Right cardiac atrium (tissue), 5 donors: ENCODE measurements at regions of chr14 and their contacts with region 1.

Region 1: GRCh38 chr14:64478634-64479250 is 13.4 kb downstream of the AKAP5 start:
- DNase-seq: no peak
- ATAC-seq: no peak
- H3K4me3 ChIP-seq: no peak overlapping the region
- H3K27ac ChIP-seq: no peak overlapping the region
- H3K4me1 ChIP-seq: no peaks in the 10 kb centered on the region
- H3K27me3 ChIP-seq: no peaks in the 10 kb centered on the region

Region 2: GRCh38 chr14:64012720-64013119 is 466.0 kb before region 1 on chr14:
- intact Hi-C with region 1: no loop called
- DNase-seq: no peak
- ATAC-seq: no peak
- H3K4me3 ChIP-seq: no peak overlapping the region
- H3K27ac ChIP-seq: no peak overlapping the region
- H3K4me1 ChIP-seq: peaks cover 2% of the 10 kb centered on the region
- H3K27me3 ChIP-seq: no peaks in the 10 kb centered on the region

Region 3: GRCh38 chr14:64053694-64054528 is 424.8 kb before region 1 on chr14:
- intact Hi-C with region 1: no loop called
- DNase-seq: no peak
- ATAC-seq: no peak
- H3K4me3 ChIP-seq: no peak overlapping the region
- H3K27ac ChIP-seq: no peak overlapping the region
- H3K4me1 ChIP-seq: no peaks in the 10 kb centered on the region
- H3K27me3 ChIP-seq: no peaks in the 10 kb centered on the region

Region 4: GRCh38 chr14:64434528-64434927 is 44.2 kb before region 1 on chr14:
- intact Hi-C with region 1: loop called in 1 of 4 experiments (anchors 5 kb)
- DNase-seq: no peak
- ATAC-seq: no peak
- H3K4me3 ChIP-seq: no peak overlapping the region
- H3K27ac ChIP-seq: no peak overlapping the region
- H3K4me1 ChIP-seq: no peaks in the 10 kb centered on the region
- H3K27me3 ChIP-seq: no peaks in the 10 kb centered on the region